H1 (cell line): ENCODE measurements at regions of chr22 and their contacts with region 1.

Region 1: DNA sequence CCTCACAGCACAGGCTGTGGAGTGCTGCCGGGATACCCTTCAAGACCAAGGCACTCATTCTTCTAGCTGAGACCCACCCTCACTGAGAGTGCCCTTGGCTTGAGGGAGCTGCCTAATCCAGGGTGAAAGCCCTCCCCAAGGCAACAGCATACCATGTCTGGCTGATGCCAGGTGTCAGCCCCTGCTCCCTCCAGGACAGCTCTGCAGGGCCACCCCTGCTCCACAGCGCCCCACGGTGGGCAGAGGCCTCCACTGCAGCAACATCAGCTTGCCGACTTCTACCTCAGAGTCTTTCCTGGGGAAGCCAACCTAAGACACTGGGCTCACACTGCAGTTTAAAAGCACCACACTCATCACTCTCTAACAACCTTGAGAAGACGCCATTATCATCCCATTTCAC is 29.0 kb downstream of the TTLL1 start:
- DNase-seq: peak; percentile 54 to 99
- H3K4me3 ChIP-seq: no peak overlapping the region
- H3K27ac ChIP-seq: no peak overlapping the region
- H3K4me1 ChIP-seq: no peaks in the 10 kb centered on the region
- H3K27me3 ChIP-seq: no peaks in the 10 kb centered on the region
- CTCF ChIP-seq: peak; percentile 93 to 99 (median 99)
- EP300 ChIP-seq: no peak
- POLR2A ChIP-seq: no peak
- RAD21 ChIP-seq: peak; percentile 88 to 91

Region 2: GRCh38 chr22:42868751-42869251 is 191.4 kb before region 1 on chr22:
- CTCF ChIA-PET with region 1: interaction called, 10 read pairs
- POLR2A ChIA-PET with region 1: no interaction called
- DNase-seq: no peak
- H3K4me3 ChIP-seq: no peak overlapping the region
- H3K27ac ChIP-seq: no peak overlapping the region
- H3K4me1 ChIP-seq: no peaks in the 10 kb centered on the region
- H3K27me3 ChIP-seq: no peaks in the 10 kb centered on the region
- CTCF ChIP-seq: no peak
- EP300 ChIP-seq: no peak
- POLR2A ChIP-seq: no peak
- RAD21 ChIP-seq: no peak

Region 3: GRCh38 chr22:42880815-42881214 is 179.4 kb before region 1 on chr22:
- CTCF ChIA-PET with region 1: interaction called, 13 read pairs
- POLR2A ChIA-PET with region 1: no interaction called
- DNase-seq: no peak
- H3K4me3 ChIP-seq: no peak overlapping the region
- H3K27ac ChIP-seq: no peak overlapping the region
- H3K4me1 ChIP-seq: peaks cover 0 to 7% (median 4%) of the 10 kb centered on the region in 4 experiments; a peak in 6 of 7 replicates
- H3K27me3 ChIP-seq: no peaks in the 10 kb centered on the region
- CTCF ChIP-seq: peak; percentile 50 to 72 (median 66)
- EP300 ChIP-seq: no peak
- POLR2A ChIP-seq: no peak
- RAD21 ChIP-seq: peak; percentile 35 to 52

Region 4: GRCh38 chr22:42895087-42895486 is 165.1 kb before region 1 on chr22:
- CTCF ChIA-PET with region 1: interaction called, 16 read pairs
- POLR2A ChIA-PET with region 1: no interaction called
- DNase-seq: no peak
- H3K4me3 ChIP-seq: no peak overlapping the region
- H3K27ac ChIP-seq: no peak overlapping the region
- H3K4me1 ChIP-seq: no peaks in the 10 kb centered on the region; a peak in 1 of 7 replicates
- H3K27me3 ChIP-seq: no peaks in the 10 kb centered on the region
- CTCF ChIP-seq: no peak
- EP300 ChIP-seq: no peak
- POLR2A ChIP-seq: no peak
- RAD21 ChIP-seq: no peak

Region 5: DNA sequence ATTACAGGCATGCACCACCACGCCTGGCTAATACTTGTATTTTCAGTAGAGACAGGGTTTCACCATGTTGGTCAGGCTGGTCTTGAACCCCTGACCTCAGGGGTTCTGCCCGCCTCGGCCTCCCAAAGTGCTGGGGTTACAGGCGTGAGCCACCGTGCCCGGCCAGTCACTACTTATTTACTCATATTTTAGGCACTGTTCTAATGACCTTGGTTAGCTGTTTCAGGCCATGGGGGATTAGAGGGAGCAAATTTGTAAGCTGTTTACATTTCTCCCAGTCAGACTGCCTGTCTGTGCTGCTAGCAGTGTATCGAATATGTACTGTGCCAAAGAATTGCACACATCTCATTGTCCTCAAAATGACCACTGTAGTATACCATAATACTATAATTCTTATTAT is 12.6 kb before region 1 on chr22:
- CTCF ChIA-PET with region 1: interaction called, 13 read pairs
- POLR2A ChIA-PET with region 1: interaction called, 4 read pairs
- DNase-seq: no peak
- H3K4me3 ChIP-seq: no peak overlapping the region
- H3K27ac ChIP-seq: no peak overlapping the region
- H3K4me1 ChIP-seq: peaks cover 0 to 2% (median 0%) of the 10 kb centered on the region in 4 experiments; a peak in 2 of 7 replicates
- H3K27me3 ChIP-seq: no peaks in the 10 kb centered on the region
- CTCF ChIP-seq: no peak
- EP300 ChIP-seq: no peak
- POLR2A ChIP-seq: no peak
- RAD21 ChIP-seq: no peak

Region 6: DNA sequence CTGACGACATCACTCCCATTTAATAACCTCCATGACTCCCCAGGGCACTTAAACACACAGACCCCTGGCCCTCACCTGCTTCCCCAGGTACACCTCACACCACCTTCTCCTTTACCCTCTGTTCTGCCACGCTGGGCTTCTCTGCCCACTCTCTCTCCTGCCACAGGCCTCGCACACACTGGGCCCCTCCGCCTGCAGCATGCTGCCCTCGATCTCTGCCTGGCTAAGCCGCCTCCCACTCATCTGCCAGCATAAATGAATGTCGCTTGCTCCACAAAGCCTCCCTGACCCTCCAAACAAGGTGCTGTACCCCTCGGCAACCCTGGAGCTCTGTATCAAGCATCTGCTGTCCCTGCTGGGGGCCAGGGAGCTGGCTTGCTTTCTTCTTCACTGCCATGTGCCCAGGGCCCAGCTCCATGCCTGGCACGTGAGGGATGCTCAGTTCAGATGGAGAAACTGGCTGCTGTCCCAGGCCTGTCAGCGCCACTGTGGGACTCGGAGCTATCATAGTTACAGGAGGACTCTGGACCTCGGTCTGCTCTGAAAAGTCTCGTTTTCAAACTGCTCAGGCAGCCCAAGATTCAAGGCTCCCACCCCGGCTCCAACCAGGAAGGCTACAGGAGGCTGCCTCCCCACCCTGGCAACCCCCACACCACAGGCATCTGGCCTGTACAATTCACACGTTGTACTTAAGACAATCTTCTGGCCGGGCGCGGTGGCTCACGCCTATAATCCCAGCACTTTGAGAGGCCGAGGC is 17.1 kb after region 1 on chr22:
- CTCF ChIA-PET with region 1: interaction called, 17 read pairs
- POLR2A ChIA-PET with region 1: no interaction called
- DNase-seq: no peak
- H3K4me3 ChIP-seq: no peak overlapping the region
- H3K27ac ChIP-seq: no peak overlapping the region
- H3K4me1 ChIP-seq: no peaks in the 10 kb centered on the region
- H3K27me3 ChIP-seq: no peaks in the 10 kb centered on the region
- CTCF ChIP-seq: no peak
- EP300 ChIP-seq: no peak
- POLR2A ChIP-seq: no peak
- RAD21 ChIP-seq: no peak

Region 7: DNA sequence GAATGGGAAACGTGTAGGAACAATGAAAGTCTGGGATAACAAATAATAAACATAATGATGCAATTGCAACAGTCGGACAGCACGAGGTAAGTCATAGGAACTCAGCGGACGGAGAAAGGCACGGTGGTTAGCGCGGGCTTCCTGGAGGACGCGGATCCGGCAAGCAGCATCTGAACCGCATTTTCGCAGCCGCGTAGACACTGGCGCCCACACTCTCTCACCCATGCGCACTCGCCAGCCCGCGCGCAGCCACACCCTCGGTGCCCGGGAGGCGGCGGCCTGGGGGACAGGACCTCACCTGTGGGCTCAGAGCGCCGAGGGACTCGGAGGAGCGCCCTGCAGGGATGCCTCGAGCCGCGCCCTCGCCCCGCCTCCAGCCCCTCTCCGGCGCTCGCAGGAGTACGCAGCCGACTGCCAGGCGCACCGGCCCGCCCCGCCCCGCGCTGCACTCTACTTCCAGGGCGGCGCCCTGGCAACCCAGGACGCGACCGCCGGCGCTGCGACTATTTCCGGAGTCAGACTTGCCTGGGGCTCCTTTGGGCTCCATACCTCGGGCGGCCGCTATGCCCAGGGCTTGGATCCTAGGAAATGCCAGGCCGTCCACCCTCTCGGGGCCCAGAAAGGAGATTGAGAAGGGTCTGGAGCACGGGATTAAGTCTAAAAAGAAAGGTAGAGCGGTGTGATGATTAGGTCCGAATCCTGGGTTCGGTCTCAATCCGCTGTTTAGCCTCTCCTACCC is 29.0 kb after region 1 on chr22 and contains the start of gene TTLL1:
- CTCF ChIA-PET with region 1: interaction called, 10 read pairs
- POLR2A ChIA-PET with region 1: no interaction called
- DNase-seq: peak; percentile 75 to 95
- H3K4me3 ChIP-seq: peak within 1 kb of the TSS; percentile 59 to 82 (median 65)
- H3K27ac ChIP-seq: no peak within 1 kb of the TSS; the same call in 1 of the 2 replicates
- H3K4me1 ChIP-seq: no peaks in the 10 kb centered on the region
- H3K27me3 ChIP-seq: no peaks in the 10 kb centered on the region
- CTCF ChIP-seq: no peak
- EP300 ChIP-seq: peak in 1 of 2 experiments; percentile 41; a peak in 1 of 3 replicates
- POLR2A ChIP-seq: peak in 1 of 2 experiments; percentile 62; a peak in 2 of 3 replicates
- RAD21 ChIP-seq: no peak; a peak in 1 of 4 replicates
- total RNA-seq, gene TTLL1: 4.1 and 5.0 TPM in 2 replicates

Region 8: GRCh38 chr22:43213051-43213450 is 152.9 kb after region 1 on chr22:
- CTCF ChIA-PET with region 1: no interaction called
- POLR2A ChIA-PET with region 1: no interaction called
- DNase-seq: peak in 1 of 2 experiments; percentile 63
- H3K4me3 ChIP-seq: no peak overlapping the region
- H3K27ac ChIP-seq: no peak overlapping the region
- H3K4me1 ChIP-seq: peaks cover 0 to 20% (median 10%) of the 10 kb centered on the region in 4 experiments; a peak in 5 of 7 replicates
- H3K27me3 ChIP-seq: no peaks in the 10 kb centered on the region
- CTCF ChIP-seq: no peak
- EP300 ChIP-seq: no peak
- POLR2A ChIP-seq: no peak
- RAD21 ChIP-seq: no peak